CD8-positive, alpha-beta T cell (primary cell): ENCODE measurements at regions of chr17 and their contacts with region 1.

Region 1: GRCh38 chr17:32936894-32937500 is 9.0 kb downstream of the TMEM98 start:
- DNase-seq: peak; percentile 16 to 74 (median 66)
- ATAC-seq: peak; percentile 55
- H3K4me3 ChIP-seq: no peak overlapping the region
- H3K4me3 Mint-ChIP-seq: peak overlapping the region; percentile 26
- H3K27ac ChIP-seq: no peak overlapping the region
- H3K27ac Mint-ChIP-seq: no peak overlapping the region
- H3K4me1 ChIP-seq: peaks cover 6% of the 10 kb centered on the region
- H3K4me1 Mint-ChIP-seq: peaks cover 3% of the 10 kb centered on the region
- H3K27me3 ChIP-seq: no peaks in the 10 kb centered on the region
- H3K27me3 Mint-ChIP-seq: peaks cover 31% of the 10 kb centered on the region
- CTCF ChIP-seq: peak; percentile 66

Region 2: GRCh38 chr17:32609085-32609484 is 327.9 kb before region 1 on chr17:
- CTCF ChIA-PET with region 1: no interaction called
- POLR2A ChIA-PET with region 1: no interaction called
- intact Hi-C with region 1: no loop called
- DNase-seq: peak; percentile 49 to 86 (median 74)
- ATAC-seq: peak; percentile 100
- H3K4me3 ChIP-seq: no peak overlapping the region
- H3K4me3 Mint-ChIP-seq: no peak overlapping the region
- H3K27ac ChIP-seq: no peak overlapping the region
- H3K27ac Mint-ChIP-seq: no peak overlapping the region
- H3K4me1 ChIP-seq: peaks cover 8% of the 10 kb centered on the region
- H3K4me1 Mint-ChIP-seq: peaks cover 6% of the 10 kb centered on the region
- H3K27me3 ChIP-seq: no peaks in the 10 kb centered on the region
- H3K27me3 Mint-ChIP-seq: no peaks in the 10 kb centered on the region
- CTCF ChIP-seq: peak; percentile 64

Region 3: DNA sequence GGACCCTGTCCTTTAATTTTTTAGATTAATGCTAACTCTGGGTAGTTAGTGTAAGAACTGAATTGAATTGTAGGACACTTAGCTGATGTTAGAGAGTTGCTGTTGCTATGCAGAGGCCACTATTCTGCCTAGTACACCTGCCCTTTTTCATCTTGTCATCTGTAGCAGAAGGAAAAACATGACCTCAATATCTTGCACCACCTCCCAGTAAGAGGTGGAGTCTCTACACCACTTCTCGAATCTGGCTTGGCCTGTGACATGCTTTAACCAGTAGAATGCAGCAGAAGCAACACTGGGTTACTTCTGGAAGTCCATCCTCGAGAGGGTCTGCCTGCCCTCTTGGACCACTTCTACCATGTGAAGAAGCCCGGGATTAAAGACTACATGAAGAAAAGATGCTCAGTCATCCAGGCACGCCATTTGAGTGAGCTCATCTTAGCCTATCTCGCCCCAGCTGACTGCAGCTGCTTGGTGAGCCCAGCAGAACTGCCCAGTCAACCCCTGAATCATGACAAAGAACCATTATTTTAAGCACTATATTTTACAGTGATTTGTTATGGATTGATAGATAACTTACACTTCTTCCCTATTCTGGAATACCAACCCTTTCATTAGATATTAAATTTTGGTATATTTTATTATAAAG is 213.6 kb before region 1 on chr17:
- CTCF ChIA-PET with region 1: no interaction called
- POLR2A ChIA-PET with region 1: no interaction called
- intact Hi-C with region 1: no loop called
- DNase-seq: no peak
- ATAC-seq: no peak
- H3K4me3 ChIP-seq: no peak overlapping the region
- H3K4me3 Mint-ChIP-seq: no peak overlapping the region
- H3K27ac ChIP-seq: no peak overlapping the region
- H3K27ac Mint-ChIP-seq: no peak overlapping the region
- H3K4me1 ChIP-seq: no peaks in the 10 kb centered on the region
- H3K4me1 Mint-ChIP-seq: no peaks in the 10 kb centered on the region
- H3K27me3 ChIP-seq: no peaks in the 10 kb centered on the region
- H3K27me3 Mint-ChIP-seq: no peaks in the 10 kb centered on the region
- CTCF ChIP-seq: no peak

Region 4: GRCh38 chr17:32954477-32954876 is 17.5 kb after region 1 on chr17:
- CTCF ChIA-PET with region 1: interaction called, 11 read pairs
- POLR2A ChIA-PET with region 1: no interaction called
- intact Hi-C with region 1: no loop called
- DNase-seq: no peak
- ATAC-seq: no peak
- H3K4me3 ChIP-seq: no peak overlapping the region
- H3K4me3 Mint-ChIP-seq: no peak overlapping the region
- H3K27ac ChIP-seq: no peak overlapping the region
- H3K27ac Mint-ChIP-seq: no peak overlapping the region
- H3K4me1 ChIP-seq: no peaks in the 10 kb centered on the region
- H3K4me1 Mint-ChIP-seq: no peaks in the 10 kb centered on the region
- H3K27me3 ChIP-seq: no peaks in the 10 kb centered on the region
- H3K27me3 Mint-ChIP-seq: peaks cover 20% of the 10 kb centered on the region
- CTCF ChIP-seq: no peak

Region 5: DNA sequence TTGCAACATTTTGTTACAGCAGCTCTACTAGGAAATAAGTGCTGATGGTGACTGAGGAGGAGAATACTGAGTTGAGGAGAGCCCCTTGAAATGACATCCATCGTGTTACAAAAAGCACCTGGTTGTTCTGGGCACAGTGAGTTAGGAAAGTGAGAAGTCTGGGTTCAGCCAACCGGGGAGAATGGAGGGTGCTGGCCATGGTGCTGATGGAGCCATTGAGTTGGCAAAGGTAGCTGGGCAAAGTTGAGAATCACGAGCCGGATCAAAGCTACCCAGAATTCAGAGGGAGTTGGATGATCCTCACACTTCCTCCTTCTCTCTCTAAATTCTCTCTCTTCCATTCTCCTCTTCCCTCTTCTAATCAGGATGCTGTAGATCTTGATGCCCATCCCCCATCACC is 391.1 kb after region 1 on chr17:
- CTCF ChIA-PET with region 1: no interaction called
- POLR2A ChIA-PET with region 1: no interaction called
- intact Hi-C with region 1: no loop called
- DNase-seq: no peak
- ATAC-seq: no peak
- H3K4me3 ChIP-seq: no peak overlapping the region
- H3K4me3 Mint-ChIP-seq: no peak overlapping the region
- H3K27ac ChIP-seq: no peak overlapping the region
- H3K27ac Mint-ChIP-seq: no peak overlapping the region
- H3K4me1 ChIP-seq: no peaks in the 10 kb centered on the region
- H3K4me1 Mint-ChIP-seq: no peaks in the 10 kb centered on the region
- H3K27me3 ChIP-seq: no peaks in the 10 kb centered on the region
- H3K27me3 Mint-ChIP-seq: peaks cover 26% of the 10 kb centered on the region
- CTCF ChIP-seq: no peak